ENCODE measurements at regions of chr11 and their contacts with region 1.

Region 1: DNA sequence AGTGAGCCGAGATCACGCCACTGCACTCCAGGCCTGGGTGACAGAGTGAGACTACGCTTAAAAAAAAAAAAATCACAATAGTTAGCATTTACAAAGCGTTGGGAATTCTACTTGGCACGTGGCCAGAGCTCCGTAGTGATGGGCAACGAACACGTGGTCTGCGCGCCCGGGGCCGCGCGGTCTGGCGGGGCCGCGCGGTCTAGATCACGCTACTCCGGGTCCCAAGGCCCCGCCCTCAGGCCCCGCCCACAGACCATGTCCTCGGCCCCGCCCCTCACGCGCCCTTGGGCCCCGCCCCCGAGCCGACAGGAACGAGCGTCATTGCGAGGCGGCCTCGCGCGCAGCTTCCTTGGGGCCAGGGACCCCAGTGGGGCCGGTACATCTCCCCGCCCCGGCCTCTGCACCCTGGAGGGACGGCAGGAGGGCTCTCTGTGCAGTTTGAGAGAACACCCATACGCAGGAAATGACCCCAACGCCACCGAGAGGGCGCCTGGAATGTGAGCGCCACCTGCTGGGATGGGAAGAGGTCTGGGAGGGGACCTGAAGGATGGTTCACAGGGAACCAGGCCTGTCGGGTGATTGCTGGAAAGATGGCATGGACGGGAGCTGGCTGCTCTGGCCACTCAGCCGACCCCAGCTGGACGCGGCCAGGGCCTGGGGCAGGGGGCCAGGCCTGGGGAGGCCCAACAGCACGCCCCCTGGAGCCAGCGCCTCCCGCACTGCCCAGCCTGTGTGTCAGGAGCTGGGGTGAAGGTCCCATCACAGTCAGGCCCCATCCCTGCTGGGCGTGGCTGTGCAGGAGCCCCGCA is 2.0 kb upstream of the PTDSS2 start:
- DNase-seq: peak; percentile 98
- H3K4me3 Mint-ChIP-seq: peak overlapping the region; percentile 97
- H3K27ac Mint-ChIP-seq: peak overlapping the region; percentile 97
- H3K4me1 Mint-ChIP-seq: peaks cover 13% of the 10 kb centered on the region
- H3K27me3 Mint-ChIP-seq: peaks cover 8% of the 10 kb centered on the region

Region 2: GRCh38 chr11:313787-314547 is 134.2 kb before region 1 on chr11 and contains the start of gene IFITM1:
- intact Hi-C with region 1: loop called (anchors 2 kb)
- DNase-seq: peak; percentile 93
- H3K4me3 Mint-ChIP-seq: peak within 1 kb of the TSS; percentile 96
- H3K27ac Mint-ChIP-seq: peak within 1 kb of the TSS; percentile 98
- H3K4me1 Mint-ChIP-seq: peaks cover 36% of the 10 kb centered on the region
- H3K27me3 Mint-ChIP-seq: no peaks in the 10 kb centered on the region
- total RNA-seq, gene IFITM1: 241 and 256 TPM in 2 replicates

Region 3: GRCh38 chr11:406978-407739 is 41.0 kb before region 1 on chr11:
- intact Hi-C with region 1: loop called (anchors 1 kb)
- DNase-seq: peak; percentile 97
- H3K4me3 Mint-ChIP-seq: peak overlapping the region; percentile 62
- H3K27ac Mint-ChIP-seq: peak overlapping the region; percentile 60
- H3K4me1 Mint-ChIP-seq: peaks cover 2% of the 10 kb centered on the region
- H3K27me3 Mint-ChIP-seq: no peaks in the 10 kb centered on the region

Region 4: DNA sequence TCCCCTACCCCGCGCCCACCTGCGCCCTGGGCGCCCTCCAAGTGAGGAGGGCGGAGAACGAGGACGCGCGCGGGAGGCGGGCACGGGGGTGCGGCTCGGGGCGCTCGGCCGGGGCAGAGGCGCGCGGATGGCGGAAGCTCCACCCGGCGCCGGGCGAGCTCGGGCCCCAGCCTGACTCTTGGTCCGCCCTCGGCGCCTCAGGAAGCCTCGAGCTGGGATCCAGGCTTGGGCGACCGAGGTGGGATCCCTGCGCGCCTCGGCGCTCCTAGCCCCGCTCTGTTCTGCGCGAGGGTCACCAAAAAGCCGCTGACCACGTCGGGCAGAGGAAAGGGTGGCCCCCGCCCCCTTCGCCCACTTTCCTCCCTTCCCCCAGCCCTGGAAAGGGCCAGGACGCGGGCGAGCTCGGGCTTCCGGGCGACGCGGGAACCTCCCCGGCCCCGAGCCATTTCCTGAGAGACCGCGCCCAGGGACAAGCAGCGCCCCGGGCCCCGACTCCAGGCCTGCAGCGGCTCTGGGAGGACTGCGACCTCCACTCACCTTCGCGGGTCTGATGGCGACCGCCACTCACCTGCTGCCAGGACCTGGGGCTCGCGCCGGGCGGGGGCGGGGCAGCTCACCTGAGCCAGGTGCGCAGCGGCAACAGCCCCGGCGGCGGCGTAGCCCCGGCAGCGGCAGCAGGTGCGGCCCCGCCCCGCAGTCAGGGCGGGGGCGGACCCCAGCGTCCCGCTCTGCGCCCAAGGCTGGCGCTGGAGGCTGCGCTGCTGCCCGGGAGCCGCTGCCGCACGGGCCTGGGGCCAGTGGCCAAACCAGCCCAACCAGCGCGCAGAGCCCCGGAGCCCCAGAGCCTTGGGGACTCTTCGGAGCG is 31.1 kb before region 1 on chr11:
- intact Hi-C with region 1: loop called (anchors 1 kb)
- DNase-seq: peak; percentile 89
- H3K4me3 Mint-ChIP-seq: peak overlapping the region; percentile 90
- H3K27ac Mint-ChIP-seq: peak overlapping the region; percentile 93
- H3K4me1 Mint-ChIP-seq: peaks cover 30% of the 10 kb centered on the region
- H3K27me3 Mint-ChIP-seq: no peaks in the 10 kb centered on the region

Region 5: GRCh38 chr11:518463-519250 is 70.5 kb after region 1 on chr11:
- intact Hi-C with region 1: loop called (anchors 2 kb)
- DNase-seq: peak; percentile 96
- H3K4me3 Mint-ChIP-seq: peak overlapping the region; percentile 75
- H3K27ac Mint-ChIP-seq: peak overlapping the region; percentile 69
- H3K4me1 Mint-ChIP-seq: peaks cover 4% of the 10 kb centered on the region
- H3K27me3 Mint-ChIP-seq: no peaks in the 10 kb centered on the region

Region 6: DNA sequence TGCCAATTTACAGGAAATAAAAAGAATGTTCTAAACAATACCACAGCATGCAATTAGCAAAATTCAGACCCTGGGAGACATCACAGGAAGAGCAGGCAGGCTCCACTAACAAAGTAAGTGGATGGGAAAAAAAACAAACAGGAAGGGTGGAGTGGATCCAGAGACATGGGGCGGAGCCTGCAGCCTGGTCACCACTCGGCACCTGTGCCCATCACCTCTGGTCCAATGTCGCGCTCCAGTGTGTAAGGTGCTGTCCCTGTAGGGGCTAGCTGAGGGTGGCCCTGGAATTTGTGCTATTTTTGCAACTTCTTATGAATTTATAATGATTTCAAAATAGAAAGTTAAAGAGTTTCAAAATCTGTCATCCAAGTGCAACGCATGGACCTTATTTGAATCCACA is 1049.5 kb after region 1 on chr11:
- intact Hi-C with region 1: no loop called
- DNase-seq: no peak
- H3K4me3 Mint-ChIP-seq: no peak overlapping the region
- H3K27ac Mint-ChIP-seq: no peak overlapping the region
- H3K4me1 Mint-ChIP-seq: peaks cover 22% of the 10 kb centered on the region
- H3K27me3 Mint-ChIP-seq: no peaks in the 10 kb centered on the region